Aorta (tissue), 5 donors: ENCODE measurements at regions of chr6 and their contacts with region 1.

Region 1: DNA sequence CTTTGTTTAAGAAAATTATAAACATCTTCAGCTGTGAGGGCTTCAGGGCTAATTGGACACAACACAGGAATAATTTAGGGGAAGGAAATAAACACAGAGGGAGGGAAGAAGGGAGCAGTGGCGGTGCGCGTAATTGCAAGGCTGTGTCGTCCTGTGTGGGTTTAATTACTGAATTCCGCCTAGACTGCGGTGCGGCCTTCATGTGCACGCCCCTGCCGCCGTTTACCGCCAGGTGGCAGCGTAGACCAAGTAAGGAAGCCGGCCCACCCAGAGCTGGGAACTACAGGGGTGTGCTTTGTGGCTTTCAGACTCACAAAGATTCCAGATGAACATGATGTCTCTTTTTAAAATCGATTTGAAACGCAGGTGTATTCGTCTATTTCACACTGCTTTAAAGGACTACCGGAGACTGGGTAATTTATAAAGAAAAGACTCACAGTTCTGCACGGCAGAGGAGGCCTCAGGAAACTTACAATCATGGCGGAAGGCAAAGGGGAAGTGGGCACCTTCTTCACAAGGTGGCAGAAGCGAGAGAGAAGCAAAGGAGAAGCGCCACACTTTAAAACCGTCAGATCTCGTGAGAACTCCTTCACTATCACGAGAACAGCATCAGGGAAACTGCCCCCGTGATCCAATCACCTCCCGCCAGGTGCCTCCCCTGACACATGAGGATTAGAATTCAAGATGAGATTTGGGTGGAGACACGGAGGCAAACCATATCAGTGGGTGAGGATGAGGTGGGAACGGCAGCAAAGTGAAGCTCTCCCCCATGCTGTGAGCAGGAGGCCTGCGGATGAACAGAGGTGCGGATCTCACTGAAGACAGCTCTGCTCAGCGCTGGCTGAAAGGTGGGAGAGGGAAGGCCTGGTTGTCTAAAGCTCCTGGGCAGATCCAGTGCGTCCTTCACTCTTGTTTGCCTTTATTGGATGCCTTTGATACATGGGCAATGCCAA is 222.0 kb upstream of the PDE10A start:
- DNase-seq: peak; percentile 74 to 89
- ATAC-seq: peak; percentile 88
- H3K4me3 ChIP-seq: no peak overlapping the region
- H3K27ac ChIP-seq: no peak overlapping the region
- H3K4me1 ChIP-seq: no peaks in the 10 kb centered on the region
- H3K27me3 ChIP-seq: no peaks in the 10 kb centered on the region

Region 2: DNA sequence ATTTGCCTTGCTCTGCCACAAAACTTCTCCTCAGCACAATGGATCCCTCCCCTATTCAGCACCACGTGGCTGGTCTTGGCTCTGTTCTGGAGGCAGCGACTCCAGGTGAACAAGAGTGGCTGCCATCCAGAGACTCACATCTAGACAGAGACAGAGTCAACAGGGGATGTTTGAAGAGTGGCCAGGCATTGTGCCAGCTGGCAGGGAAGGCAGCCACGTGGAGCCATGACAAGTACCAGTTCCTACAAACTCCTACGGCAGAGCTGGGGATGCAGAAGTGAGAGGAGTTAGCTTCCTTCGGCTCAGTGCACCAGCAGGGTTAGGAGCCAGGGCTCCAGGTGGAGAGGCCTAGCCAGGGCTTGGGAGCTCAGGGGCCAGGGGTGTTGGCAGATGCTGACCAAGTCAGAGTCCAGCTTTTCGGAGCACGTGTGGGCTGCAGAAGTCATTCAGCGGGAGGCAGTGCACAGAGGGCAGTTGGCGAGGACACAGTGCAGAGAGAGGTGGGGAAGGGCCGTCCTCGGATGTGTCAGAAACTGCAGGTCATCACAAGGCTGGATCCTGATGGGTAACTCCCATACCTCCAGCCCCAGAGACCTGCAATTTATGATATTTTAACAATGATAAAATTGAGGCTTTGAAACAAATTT is 50.4 kb before region 1 on chr6:
- intact Hi-C with region 1: no loop called
- DNase-seq: no peak
- ATAC-seq: peak; percentile 49
- H3K4me3 ChIP-seq: no peak overlapping the region
- H3K27ac ChIP-seq: no peak overlapping the region
- H3K4me1 ChIP-seq: no peaks in the 10 kb centered on the region
- H3K27me3 ChIP-seq: no peaks in the 10 kb centered on the region

Region 3: GRCh38 chr6:165922309-165922794 is 37.3 kb after region 1 on chr6:
- intact Hi-C with region 1: no loop called
- DNase-seq: no peak
- ATAC-seq: no peak
- H3K4me3 ChIP-seq: no peak overlapping the region
- H3K27ac ChIP-seq: no peak overlapping the region
- H3K4me1 ChIP-seq: no peaks in the 10 kb centered on the region
- H3K27me3 ChIP-seq: no peaks in the 10 kb centered on the region

Region 4: GRCh38 chr6:166005944-166006899 is 121.1 kb after region 1 on chr6:
- intact Hi-C with region 1: no loop called
- DNase-seq: peak in 1 of 2 donors; percentile 79
- ATAC-seq: peak; percentile 85
- H3K4me3 ChIP-seq: peak overlapping the region in 1 of 2 donors; percentile 15
- H3K27ac ChIP-seq: no peak overlapping the region
- H3K4me1 ChIP-seq: no peaks in the 10 kb centered on the region
- H3K27me3 ChIP-seq: peaks cover 0 to 1% of the 10 kb centered on the region in 2 donors

Region 5: GRCh38 chr6:166097915-166098522 is 212.9 kb after region 1 on chr6:
- intact Hi-C with region 1: loop called in 1 of 2 experiments (anchors 2 kb)
- DNase-seq: peak; percentile 69 to 86
- ATAC-seq: peak; percentile 94
- H3K4me3 ChIP-seq: no peak overlapping the region
- H3K27ac ChIP-seq: no peak overlapping the region
- H3K4me1 ChIP-seq: no peaks in the 10 kb centered on the region
- H3K27me3 ChIP-seq: no peaks in the 10 kb centered on the region

Region 6: GRCh38 chr6:166106076-166106686 is 221.1 kb after region 1 on chr6:
- intact Hi-C with region 1: loop called in 1 of 2 experiments (anchors 2 kb)
- DNase-seq: peak in 1 of 2 donors; percentile 59
- ATAC-seq: peak; percentile 73
- H3K4me3 ChIP-seq: no peak overlapping the region
- H3K27ac ChIP-seq: no peak overlapping the region
- H3K4me1 ChIP-seq: no peaks in the 10 kb centered on the region
- H3K27me3 ChIP-seq: no peaks in the 10 kb centered on the region